GM12878 (cell line): ENCODE measurements at regions of chr1 and their contacts with region 1.

Region 1: DNA sequence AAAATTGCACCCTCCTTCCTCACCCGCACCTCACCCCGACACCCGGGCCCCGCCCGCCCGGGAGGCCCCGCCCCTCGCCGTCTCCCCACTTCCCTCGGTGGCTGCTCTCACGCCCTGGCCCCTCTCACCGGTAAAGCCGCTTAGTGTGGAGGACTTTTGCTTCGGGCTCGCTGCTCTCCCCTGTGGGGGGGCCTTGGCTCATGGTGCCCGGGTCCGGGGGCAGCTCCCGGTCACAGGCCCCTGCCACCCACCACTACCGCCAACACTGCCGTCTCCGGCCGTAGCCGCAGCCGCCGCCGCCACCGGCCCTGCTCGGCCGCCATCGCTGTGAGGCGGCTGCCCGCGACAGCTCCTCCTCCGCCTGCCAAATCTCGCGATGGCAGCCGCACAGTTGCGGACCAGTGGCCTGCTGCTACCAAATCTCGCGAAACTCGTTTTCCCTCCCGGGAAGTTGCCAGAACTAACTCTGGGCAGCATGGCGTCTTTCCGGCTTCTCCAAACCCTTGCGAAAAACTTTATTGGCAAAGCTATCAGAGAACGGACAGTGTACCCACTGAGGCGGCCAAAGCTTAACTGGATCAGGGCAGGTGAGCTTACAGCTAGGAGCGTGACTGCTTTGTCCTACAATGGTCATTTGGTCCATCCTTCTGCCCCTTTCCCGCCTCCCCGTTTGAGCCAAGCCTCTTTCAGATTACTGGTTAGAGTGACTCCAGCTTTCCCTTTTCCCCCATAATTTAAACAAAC is at the start of gene SMG5:
- DNase-seq: peak; percentile 96
- ATAC-seq: peak; percentile 93
- H3K4me3 ChIP-seq: peak within 1 kb of the TSS; percentile 94
- H3K27ac ChIP-seq: peak within 1 kb of the TSS; percentile 86
- H3K4me1 ChIP-seq: peaks cover 15% of the 10 kb centered on the region; the same call in 1 of the 2 replicates
- H3K27me3 ChIP-seq: no peaks in the 10 kb centered on the region
- CTCF ChIP-seq: no peak
- EP300 ChIP-seq: no peak
- POLR2A ChIP-seq: peak; percentile 100
- RAD21 ChIP-seq: no peak
- polyA plus RNA-seq, gene SMG5: 0.76 to 1.9 TPM

Region 2: DNA sequence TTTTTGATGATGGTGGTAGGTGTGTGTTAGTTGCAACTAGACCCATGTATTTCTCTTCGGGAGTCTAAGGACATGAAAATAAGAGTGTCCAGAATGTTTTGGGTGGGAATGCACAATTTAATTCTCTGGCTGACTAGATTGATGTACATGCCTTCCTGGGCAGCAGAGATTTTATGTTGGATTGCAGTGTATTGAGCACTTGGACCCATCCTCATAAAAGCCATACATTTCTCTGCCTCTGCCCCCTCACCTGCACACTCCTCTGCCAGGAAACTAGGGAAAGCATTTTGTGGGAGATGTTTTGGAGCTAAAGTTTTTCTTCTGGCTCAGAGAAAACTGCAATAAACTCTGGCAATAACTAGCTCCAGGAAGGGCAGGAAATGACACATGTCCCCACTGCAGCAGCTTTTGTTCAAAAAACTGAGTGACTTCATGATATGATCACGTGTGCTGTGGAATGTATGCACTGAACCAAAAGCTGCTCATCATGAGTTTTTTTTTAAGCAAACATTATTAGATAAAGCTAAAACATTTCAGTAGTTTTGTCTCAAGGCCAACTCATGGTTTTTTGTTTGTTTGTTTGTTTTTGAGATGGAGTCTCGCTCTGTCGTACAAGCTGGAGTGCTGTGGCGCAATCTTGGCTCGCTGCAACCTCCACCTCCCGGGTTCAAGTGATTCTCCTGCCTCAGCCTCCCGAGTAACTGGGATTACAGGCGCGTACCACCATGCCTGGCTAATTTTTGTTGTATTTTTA is 389.1 kb before region 1 on chr1:
- CTCF ChIA-PET with region 1: no interaction called
- POLR2A ChIA-PET with region 1: no interaction called
- RAD21 ChIA-PET with region 1: no interaction called
- SMC1A ChIA-PET with region 1: no interaction called
- in situ Hi-C with region 1: no loop called
- intact Hi-C with region 1: no loop called
- DNase-seq: no peak
- ATAC-seq: no peak
- H3K4me3 ChIP-seq: no peak overlapping the region
- H3K27ac ChIP-seq: no peak overlapping the region
- H3K4me1 ChIP-seq: no peaks in the 10 kb centered on the region
- H3K27me3 ChIP-seq: no peaks in the 10 kb centered on the region
- CTCF ChIP-seq: no peak
- EP300 ChIP-seq: no peak
- POLR2A ChIP-seq: no peak
- RAD21 ChIP-seq: no peak

Region 3: DNA sequence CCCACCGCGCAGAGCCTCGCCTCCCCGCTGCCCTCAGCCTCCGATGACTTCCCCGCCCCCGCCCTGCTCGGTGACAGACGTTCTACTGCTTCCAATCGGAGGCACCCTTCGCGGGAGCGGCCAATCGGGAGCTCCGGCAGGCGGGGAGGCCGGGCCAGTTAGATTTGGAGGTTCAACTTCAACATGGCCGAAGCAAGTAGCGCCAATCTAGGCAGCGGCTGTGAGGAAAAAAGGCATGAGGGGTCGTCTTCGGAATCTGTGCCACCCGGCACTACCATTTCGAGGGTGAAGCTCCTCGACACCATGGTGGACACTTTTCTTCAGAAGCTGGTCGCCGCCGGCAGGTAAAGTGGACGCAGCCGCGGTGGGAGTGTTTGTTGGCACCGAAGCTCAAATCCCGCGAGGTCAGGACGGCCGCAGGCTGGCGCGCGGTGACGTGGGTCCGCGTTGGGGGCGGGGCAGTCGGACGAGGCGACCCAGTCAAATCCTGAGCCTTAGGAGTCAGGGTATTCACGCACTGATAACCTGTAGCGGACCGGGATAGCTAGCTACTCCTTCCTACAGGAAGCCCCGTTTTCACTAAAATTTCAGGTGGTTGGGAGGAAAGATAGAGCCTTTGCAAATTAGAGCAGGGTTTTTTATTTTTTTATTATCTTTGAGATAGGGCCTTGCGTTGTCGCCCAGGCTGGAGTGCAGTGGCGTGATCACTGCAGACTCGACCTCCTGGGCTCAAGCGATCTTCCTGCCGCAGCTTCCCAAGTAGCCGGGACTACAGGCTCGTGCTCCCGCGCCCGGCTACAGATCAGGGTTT is 69.6 kb before region 1 on chr1 and contains the start of gene PMF1:
- CTCF ChIA-PET with region 1: no interaction called
- POLR2A ChIA-PET with region 1: interaction called, 13 read pairs
- RAD21 ChIA-PET with region 1: interaction called, 5 read pairs
- SMC1A ChIA-PET with region 1: interaction called, 4 read pairs
- in situ Hi-C with region 1: no loop called
- intact Hi-C with region 1: no loop called
- DNase-seq: peak; percentile 88
- ATAC-seq: peak; percentile 99
- H3K4me3 ChIP-seq: peak within 1 kb of the TSS; percentile 96
- H3K27ac ChIP-seq: peak within 1 kb of the TSS; percentile 99
- H3K4me1 ChIP-seq: peaks cover 10% of the 10 kb centered on the region
- H3K27me3 ChIP-seq: no peaks in the 10 kb centered on the region
- CTCF ChIP-seq: 0 out of 6 replicates have a peak, but pooled peaks of 1 of the 3 experiments have one; percentile 1
- EP300 ChIP-seq: no peak
- POLR2A ChIP-seq: peak; percentile 94
- RAD21 ChIP-seq: no peak
- polyA plus RNA-seq, gene PMF1: 6.7 to 17.6 TPM

Region 4: DNA sequence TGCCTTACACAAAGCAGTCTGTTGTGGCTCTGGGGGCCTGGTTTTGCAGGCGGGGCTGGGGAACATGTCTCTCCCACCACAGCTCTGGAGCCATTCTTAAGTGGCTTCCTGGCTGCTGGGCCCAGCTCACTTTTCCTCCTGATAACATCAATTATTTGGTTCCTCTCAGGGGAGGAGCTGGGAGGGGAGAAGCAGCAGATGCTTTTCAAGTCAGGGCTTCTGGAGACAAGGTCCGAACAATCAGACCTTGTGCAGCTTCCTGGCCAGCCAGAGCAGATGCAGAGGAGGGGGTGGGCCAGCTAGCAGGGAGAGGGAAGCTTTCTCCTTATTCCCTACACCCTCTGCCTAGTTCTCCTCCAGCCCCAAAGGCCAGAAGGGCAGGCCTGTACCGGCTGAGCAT is 31.1 kb before region 1 on chr1:
- CTCF ChIA-PET with region 1: no interaction called
- POLR2A ChIA-PET with region 1: no interaction called
- RAD21 ChIA-PET with region 1: no interaction called
- SMC1A ChIA-PET with region 1: no interaction called
- in situ Hi-C with region 1: no loop called
- intact Hi-C with region 1: no loop called
- DNase-seq: no peak
- ATAC-seq: no peak
- H3K4me3 ChIP-seq: no peak overlapping the region
- H3K27ac ChIP-seq: no peak overlapping the region
- H3K4me1 ChIP-seq: no peaks in the 10 kb centered on the region
- H3K27me3 ChIP-seq: no peaks in the 10 kb centered on the region
- CTCF ChIP-seq: no peak
- EP300 ChIP-seq: no peak
- POLR2A ChIP-seq: no peak
- RAD21 ChIP-seq: no peak

Region 5: GRCh38 chr1:156270314-156270713 is 12.3 kb before region 1 on chr1:
- CTCF ChIA-PET with region 1: interaction called, 9 read pairs
- POLR2A ChIA-PET with region 1: interaction called, 12 read pairs
- RAD21 ChIA-PET with region 1: interaction called, 5 read pairs
- SMC1A ChIA-PET with region 1: interaction called, 6 read pairs
- in situ Hi-C with region 1: no loop called
- intact Hi-C with region 1: no loop called
- DNase-seq: no peak
- ATAC-seq: no peak
- H3K4me3 ChIP-seq: no peak overlapping the region
- H3K27ac ChIP-seq: no peak overlapping the region
- H3K4me1 ChIP-seq: no peaks in the 10 kb centered on the region
- H3K27me3 ChIP-seq: no peaks in the 10 kb centered on the region
- CTCF ChIP-seq: no peak
- EP300 ChIP-seq: no peak
- POLR2A ChIP-seq: no peak
- RAD21 ChIP-seq: no peak

Region 6: GRCh38 chr1:156295391-156295947 is 12.8 kb after region 1 on chr1 and contains the start of gene GLMP:
- CTCF ChIA-PET with region 1: interaction called, 7 read pairs
- POLR2A ChIA-PET with region 1: interaction called, 12 read pairs
- RAD21 ChIA-PET with region 1: interaction called, 3 read pairs
- SMC1A ChIA-PET with region 1: interaction called, 10 read pairs
- in situ Hi-C with region 1: no loop called
- intact Hi-C with region 1: no loop called
- DNase-seq: no peak
- ATAC-seq: peak; percentile 73
- H3K4me3 ChIP-seq: peak within 1 kb of the TSS; percentile 87
- H3K27ac ChIP-seq: no peak within 1 kb of the TSS
- H3K4me1 ChIP-seq: peaks cover 4% of the 10 kb centered on the region
- H3K27me3 ChIP-seq: no peaks in the 10 kb centered on the region
- CTCF ChIP-seq: no peak
- EP300 ChIP-seq: no peak
- POLR2A ChIP-seq: peak; percentile 65
- RAD21 ChIP-seq: no peak
- polyA plus RNA-seq, gene GLMP: 10.8 to 12.8 TPM

Region 7: GRCh38 chr1:156319664-156320063 is 37.0 kb after region 1 on chr1:
- CTCF ChIA-PET with region 1: interaction called, 58 read pairs
- POLR2A ChIA-PET with region 1: interaction called, 7 read pairs
- RAD21 ChIA-PET with region 1: interaction called, 13 read pairs
- SMC1A ChIA-PET with region 1: interaction called, 39 read pairs
- in situ Hi-C with region 1: no loop called
- intact Hi-C with region 1: no loop called
- DNase-seq: no peak
- ATAC-seq: no peak
- H3K4me3 ChIP-seq: no peak overlapping the region
- H3K27ac ChIP-seq: no peak overlapping the region
- H3K4me1 ChIP-seq: no peaks in the 10 kb centered on the region
- H3K27me3 ChIP-seq: no peaks in the 10 kb centered on the region
- CTCF ChIP-seq: peak; percentile 41 to 51 (median 46)
- EP300 ChIP-seq: no peak
- POLR2A ChIP-seq: no peak
- RAD21 ChIP-seq: peak; percentile 64